Heart left ventricle (tissue), 16 donors: ENCODE measurements at regions of chr16 and their contacts with region 1.

Region 1: GRCh38 chr16:81006814-81007696 is at the starts of genes CENPN and CMC2:
- DNase-seq: peak; percentile 98 to 100 (median 99)
- ATAC-seq: peak; percentile 95 to 96 (median 96)
- H3K4me3 ChIP-seq: peak within 1 kb of the TSS; percentile 65 to 100 (median 94)
- H3K27ac ChIP-seq: peak within 1 kb of the TSS; percentile 90 to 100 (median 99)
- H3K4me1 ChIP-seq: peaks cover 0 to 41% (median 21%) of the 10 kb centered on the region in 12 donors
- H3K27me3 ChIP-seq: no peaks in the 10 kb centered on the region
- CTCF ChIP-seq: peak in 2 of 12 donors; percentile 20
- POLR2A ChIP-seq: peak; percentile 74
- total RNA-seq, gene CENPN: 7.0 to 14.8 (median 10.3) TPM
- total RNA-seq, gene CMC2: 89.0 to 182 (median 132) TPM

Region 2: GRCh38 chr16:80931801-80932712 is 75.0 kb before region 1 on chr16:
- intact Hi-C with region 1: loop called in 2 of 10 experiments (anchors 2 to 5 kb)
- DNase-seq: peak; percentile 58 to 88 (median 78)
- ATAC-seq: peak; percentile 73 to 92 (median 86)
- H3K4me3 ChIP-seq: peak overlapping the region; percentile 14 to 65 (median 52)
- H3K27ac ChIP-seq: peak overlapping the region; percentile 33 to 91 (median 81)
- H3K4me1 ChIP-seq: peaks cover 0 to 22% (median 9%) of the 10 kb centered on the region in 12 donors
- H3K27me3 ChIP-seq: peaks cover 0 to 38% (median 0%) of the 10 kb centered on the region in 9 donors
- CTCF ChIP-seq: peak in 6 of 12 donors; percentile 3 to 27 (median 10)
- POLR2A ChIP-seq: no peak

Region 3: GRCh38 chr16:81077076-81077940 is 70.3 kb after region 1 on chr16 and contains the start of gene C16orf46:
- intact Hi-C with region 1: loop called in 2 of 10 experiments (anchors 2 kb)
- DNase-seq: peak; percentile 97 to 99 (median 97)
- ATAC-seq: peak; percentile 98 to 99 (median 99)
- H3K4me3 ChIP-seq: peak within 1 kb of the TSS; percentile 63 to 90 (median 77)
- H3K27ac ChIP-seq: peak within 1 kb of the TSS; percentile 58 to 99 (median 97)
- H3K4me1 ChIP-seq: peaks cover 0 to 14% (median 6%) of the 10 kb centered on the region in 12 donors
- H3K27me3 ChIP-seq: no peaks in the 10 kb centered on the region
- CTCF ChIP-seq: no peak
- POLR2A ChIP-seq: peak; percentile 16 to 88
- total RNA-seq, gene C16orf46: 0.34 to 1.4 (median 0.63) TPM in 6 of 9 donors, not detected in the others

Region 4: GRCh38 chr16:81730090-81731051 is 723.3 kb after region 1 on chr16:
- intact Hi-C with region 1: loop called in 4 of 10 experiments (anchors 5 to 10 kb)
- DNase-seq: peak; percentile 89 to 94 (median 89)
- ATAC-seq: peak; percentile 90 to 97 (median 96)
- H3K4me3 ChIP-seq: peak overlapping the region in 11 of 12 donors; percentile 2 to 54 (median 44)
- H3K27ac ChIP-seq: peak overlapping the region in 10 of 12 donors; percentile 24 to 76 (median 62)
- H3K4me1 ChIP-seq: peaks cover 0 to 16% (median 10%) of the 10 kb centered on the region in 12 donors
- H3K27me3 ChIP-seq: no peaks in the 10 kb centered on the region
- CTCF ChIP-seq: peak; percentile 23 to 74 (median 54)
- POLR2A ChIP-seq: peak in 1 of 2 donors; percentile 27

Region 5: DNA sequence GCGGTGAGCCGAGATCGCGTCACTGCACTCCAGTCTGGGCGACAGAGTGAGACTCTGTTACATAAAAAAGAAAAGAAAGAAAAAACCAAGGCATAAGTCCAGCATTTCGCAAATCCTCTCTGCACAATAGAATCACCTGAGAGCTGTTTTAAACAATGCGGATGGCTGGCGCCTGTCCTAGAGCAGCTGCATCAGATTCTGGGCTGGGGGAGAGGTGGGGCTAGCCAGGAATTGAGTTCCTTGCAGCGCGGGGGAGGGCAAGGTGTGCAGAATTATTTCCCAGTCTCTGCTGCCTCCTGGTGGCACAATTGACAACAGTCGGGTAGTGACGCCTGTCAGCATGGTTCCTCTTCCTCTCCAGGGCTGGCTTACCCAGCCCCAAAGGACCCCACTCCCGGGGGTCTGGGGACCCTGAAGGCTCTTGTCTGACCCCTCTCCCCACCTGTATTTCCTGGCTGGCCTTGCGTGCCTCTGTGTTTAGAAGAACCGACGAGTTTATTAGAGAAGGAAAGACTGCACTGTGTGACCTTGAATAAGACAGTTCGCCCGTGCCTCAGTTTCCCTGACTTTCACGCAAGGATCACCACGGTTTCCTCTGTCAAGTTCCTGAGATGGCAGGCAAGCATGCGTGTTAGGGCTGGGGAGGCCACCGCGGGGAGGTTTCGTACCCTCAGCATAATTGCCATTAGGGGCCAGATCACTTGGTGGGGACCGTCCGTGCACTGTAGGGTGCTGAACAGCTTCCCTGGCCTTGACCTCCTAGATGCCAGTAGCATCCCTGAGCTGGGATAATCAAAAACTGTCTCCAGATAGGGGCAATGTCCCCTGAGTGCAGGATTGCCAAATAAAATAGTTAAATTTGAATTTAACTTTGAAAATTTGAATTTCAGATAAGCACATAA is 731.1 kb after region 1 on chr16:
- intact Hi-C with region 1: loop called in 4 of 10 experiments (anchors 5 to 10 kb)
- DNase-seq: peak; percentile 79 to 83 (median 82)
- ATAC-seq: peak; percentile 89 to 96 (median 93)
- H3K4me3 ChIP-seq: peak overlapping the region in 10 of 12 donors; percentile 2 to 44 (median 29)
- H3K27ac ChIP-seq: peak overlapping the region in 5 of 12 donors; percentile 20 to 52 (median 33)
- H3K4me1 ChIP-seq: peaks cover 0 to 14% (median 4%) of the 10 kb centered on the region in 12 donors
- H3K27me3 ChIP-seq: peaks cover 0 to 2% (median 0%) of the 10 kb centered on the region in 9 donors
- CTCF ChIP-seq: peak; percentile 75 to 91 (median 82)
- POLR2A ChIP-seq: no peak